Vagina (tissue), 2 donors: ENCODE measurements at regions of chr10 and their contacts with region 1.

Region 1: GRCh38 chr10:80498833-80499741 is 38.6 kb upstream of the SH2D4B start:
- DNase-seq: peak in 1 of 2 donors; percentile 100
- H3K4me3 ChIP-seq: peak overlapping the region in 1 of 2 donors; percentile 4
- H3K27ac ChIP-seq: peak overlapping the region; percentile 91
- H3K4me1 ChIP-seq: peaks cover 98% of the 10 kb centered on the region
- H3K27me3 ChIP-seq: no peaks in the 10 kb centered on the region
- CTCF ChIP-seq: no peak
- POLR2A ChIP-seq: no peak

Region 2: DNA sequence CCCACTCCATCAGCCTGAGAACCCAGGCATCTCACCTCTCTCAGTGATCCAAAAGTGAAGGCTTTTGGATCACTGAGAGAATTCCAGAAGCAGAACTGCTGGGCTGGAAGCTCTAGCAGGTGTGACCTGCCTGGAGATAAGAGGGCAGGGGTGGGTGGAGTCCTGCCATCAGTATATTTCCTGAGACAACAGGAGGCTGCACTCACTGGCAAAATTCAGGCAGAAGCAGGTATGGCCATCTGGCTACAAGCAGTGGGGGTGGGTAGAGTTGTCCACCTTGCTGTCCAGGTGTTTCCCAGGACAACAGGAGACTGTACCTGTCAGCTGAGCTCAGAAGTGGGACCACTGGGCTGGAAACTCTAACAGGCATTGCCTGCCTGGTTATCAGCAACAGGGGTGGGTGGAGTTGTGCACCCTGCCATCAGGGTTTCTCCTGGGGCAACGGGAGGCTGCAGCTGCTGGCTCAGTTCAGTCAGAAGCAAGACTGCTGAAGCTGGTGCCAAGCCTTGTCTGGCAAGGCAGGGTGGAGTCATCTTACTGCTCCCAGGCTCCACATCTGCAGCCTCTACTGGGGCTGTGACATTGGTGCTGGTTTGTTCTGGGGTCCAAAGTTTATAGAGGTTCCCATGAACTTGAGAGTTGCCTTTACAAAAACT is 503.0 kb before region 1 on chr10:
- intact Hi-C with region 1: no loop called
- DNase-seq: no peak
- H3K4me3 ChIP-seq: no peak overlapping the region
- H3K27ac ChIP-seq: no peak overlapping the region
- H3K4me1 ChIP-seq: no peaks in the 10 kb centered on the region
- H3K27me3 ChIP-seq: no peaks in the 10 kb centered on the region
- CTCF ChIP-seq: no peak
- POLR2A ChIP-seq: no peak

Region 3: GRCh38 chr10:80382989-80383388 is 116.1 kb before region 1 on chr10:
- intact Hi-C with region 1: loop called (anchors 5 kb)
- DNase-seq: no peak
- H3K4me3 ChIP-seq: no peak overlapping the region
- H3K27ac ChIP-seq: no peak overlapping the region
- H3K4me1 ChIP-seq: peaks cover 5% of the 10 kb centered on the region
- H3K27me3 ChIP-seq: no peaks in the 10 kb centered on the region
- CTCF ChIP-seq: peak; percentile 45 to 62 (median 61)
- POLR2A ChIP-seq: no peak

Region 4: DNA sequence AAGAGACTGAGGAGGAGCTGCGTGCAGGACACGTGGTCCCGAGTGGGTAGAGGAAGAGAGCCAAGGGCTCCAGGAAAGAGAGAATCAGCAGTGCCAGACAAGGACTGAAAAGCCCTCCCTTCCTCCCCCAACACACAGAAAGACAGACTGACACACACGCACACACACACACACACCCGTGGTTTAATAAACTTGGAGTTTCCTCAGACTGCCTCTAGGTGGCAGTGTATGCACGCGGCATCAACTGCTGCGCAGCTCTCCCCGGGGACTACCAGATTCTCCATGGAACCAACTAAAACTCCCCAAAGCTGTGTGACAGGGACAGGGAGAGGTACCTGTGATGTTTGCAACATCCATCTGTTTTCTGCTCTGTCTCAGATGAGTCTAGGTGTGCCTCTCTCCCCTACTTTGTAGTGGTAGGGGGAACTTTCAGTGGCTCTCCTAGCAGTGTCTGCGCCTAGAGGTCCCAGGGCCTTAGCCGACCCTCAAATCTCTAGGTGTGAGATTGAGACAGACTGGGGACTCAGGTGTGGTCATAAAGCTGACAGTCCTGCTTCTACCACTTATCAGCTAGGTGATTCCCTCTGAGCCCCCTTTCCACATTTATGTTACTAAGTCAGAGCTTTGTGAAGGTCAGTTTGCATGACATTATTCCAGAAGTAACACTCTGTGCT is 54.3 kb before region 1 on chr10:
- intact Hi-C with region 1: loop called (anchors 5 kb)
- DNase-seq: no peak
- H3K4me3 ChIP-seq: no peak overlapping the region
- H3K27ac ChIP-seq: no peak overlapping the region
- H3K4me1 ChIP-seq: peaks cover 24% of the 10 kb centered on the region
- H3K27me3 ChIP-seq: no peaks in the 10 kb centered on the region
- CTCF ChIP-seq: peak in 2 of 3 experiments; percentile 37 to 62
- POLR2A ChIP-seq: no peak

Region 5: GRCh38 chr10:80460399-80461207 is 38.5 kb before region 1 on chr10:
- intact Hi-C with region 1: loop called (anchors 5 kb)
- DNase-seq: no peak
- H3K4me3 ChIP-seq: no peak overlapping the region
- H3K27ac ChIP-seq: peak overlapping the region; percentile 89
- H3K4me1 ChIP-seq: peaks cover 100% of the 10 kb centered on the region
- H3K27me3 ChIP-seq: no peaks in the 10 kb centered on the region
- CTCF ChIP-seq: no peak
- POLR2A ChIP-seq: no peak

Region 6: GRCh38 chr10:80699602-80700039 is 200.5 kb after region 1 on chr10:
- intact Hi-C with region 1: no loop called
- DNase-seq: no peak
- H3K4me3 ChIP-seq: no peak overlapping the region
- H3K27ac ChIP-seq: no peak overlapping the region
- H3K4me1 ChIP-seq: no peaks in the 10 kb centered on the region
- H3K27me3 ChIP-seq: no peaks in the 10 kb centered on the region
- CTCF ChIP-seq: peak in 2 of 3 experiments; percentile 74 to 77
- POLR2A ChIP-seq: no peak